Posterior cingulate gyrus (tissue), 11 donors: ENCODE measurements at regions of chr12 and their contacts with region 1.

Region 1: GRCh38 chr12:49232940-49233841 is 31.7 kb upstream of the TUBA1C start:
- DNase-seq: peak; percentile 71 to 97 (median 82)

Region 2: GRCh38 chr12:48999371-49000131 is 233.6 kb before region 1 on chr12 and contains the start of gene DDN:
- intact Hi-C with region 1: no loop called
- DNase-seq: peak in 8 of 10 donors; percentile 54 to 96 (median 76)

Region 3: DNA sequence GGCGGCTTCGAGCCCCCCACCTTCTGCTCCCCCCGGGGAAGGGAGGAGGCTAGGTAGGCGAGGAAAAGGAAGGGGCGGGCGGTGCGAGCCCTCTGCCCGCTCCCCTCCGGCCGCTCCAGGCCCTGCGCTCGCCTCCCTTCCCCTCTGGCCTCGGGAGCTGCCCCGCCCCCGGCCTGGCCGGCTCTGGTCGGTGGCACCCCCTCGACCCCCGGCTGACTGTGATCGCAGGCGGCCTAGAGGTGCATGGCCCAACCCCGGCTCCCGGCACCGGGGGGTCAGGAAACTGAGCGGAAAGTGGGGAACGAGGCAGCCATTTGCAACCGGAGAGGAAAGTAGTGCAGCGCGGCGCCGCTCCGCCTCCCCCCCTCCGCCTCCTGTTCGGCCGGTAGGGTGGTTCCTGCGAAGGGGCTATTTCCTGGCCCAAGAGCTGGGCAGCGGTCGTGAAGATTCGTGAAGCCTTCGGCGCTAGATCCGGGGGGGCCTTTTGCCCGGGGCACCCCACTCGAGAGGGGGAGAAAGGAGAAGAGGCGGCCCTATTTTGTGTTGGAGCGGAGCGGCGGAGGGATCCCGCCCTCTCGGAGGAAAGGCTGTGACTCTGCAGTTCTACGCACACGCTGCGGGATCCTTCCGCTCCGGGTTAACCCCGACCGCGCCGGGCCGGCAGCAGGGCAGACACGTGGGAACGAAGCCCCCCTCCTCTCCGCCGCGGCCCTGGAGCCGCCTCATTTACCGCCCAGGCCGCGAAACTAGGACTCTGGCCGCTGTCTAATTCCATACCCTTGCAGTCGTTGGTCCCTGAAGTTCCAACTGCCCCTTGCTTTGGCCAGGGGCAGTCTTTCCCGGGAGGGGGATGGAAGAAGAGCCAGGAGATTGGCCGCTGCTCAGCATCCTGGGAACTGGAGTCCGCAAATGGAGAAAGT is 172.7 kb before region 1 on chr12 and contains the start of gene KMT2D:
- intact Hi-C with region 1: loop called (anchors 2 kb)
- DNase-seq: peak; percentile 86 to 99 (median 90)

Region 4: GRCh38 chr12:49088190-49088931 is 144.8 kb before region 1 on chr12:
- intact Hi-C with region 1: loop called (anchors 1 kb)
- DNase-seq: peak; percentile 60 to 96 (median 80)

Region 5: GRCh38 chr12:49130151-49131050 is 102.8 kb before region 1 on chr12:
- intact Hi-C with region 1: loop called (anchors 1 kb)
- DNase-seq: peak; percentile 82 to 99 (median 91)

Region 6: GRCh38 chr12:49187184-49187583 is 46.0 kb before region 1 on chr12:
- intact Hi-C with region 1: loop called (anchors 1 kb)
- DNase-seq: peak; percentile 76 to 98 (median 84)

Region 7: GRCh38 chr12:49322708-49323523 is 89.7 kb after region 1 on chr12 and contains the start of gene TROAP:
- intact Hi-C with region 1: no loop called
- DNase-seq: peak; percentile 94 to 100 (median 98)